ENCODE measurements at regions of chrX and their contacts with region 1.

Region 1: GRCh38 chrX:111098874-111099273 is 2.9 kb downstream of the PAK3 start:
- DNase-seq: peak; percentile 3 to 23
- ATAC-seq: peak in 1 of 8 donors; percentile 25
- H3K4me3 ChIP-seq: no peak overlapping the region
- H3K27ac ChIP-seq: no peak overlapping the region
- H3K4me1 ChIP-seq: peaks cover 0 to 4% (median 0%) of the 10 kb centered on the region in 9 donors
- H3K27me3 ChIP-seq: peaks cover 0 to 85% (median 0%) of the 10 kb centered on the region in 7 donors
- CTCF ChIP-seq: peak in 8 of 9 donors; percentile 32 to 75 (median 54)

Region 2: DNA sequence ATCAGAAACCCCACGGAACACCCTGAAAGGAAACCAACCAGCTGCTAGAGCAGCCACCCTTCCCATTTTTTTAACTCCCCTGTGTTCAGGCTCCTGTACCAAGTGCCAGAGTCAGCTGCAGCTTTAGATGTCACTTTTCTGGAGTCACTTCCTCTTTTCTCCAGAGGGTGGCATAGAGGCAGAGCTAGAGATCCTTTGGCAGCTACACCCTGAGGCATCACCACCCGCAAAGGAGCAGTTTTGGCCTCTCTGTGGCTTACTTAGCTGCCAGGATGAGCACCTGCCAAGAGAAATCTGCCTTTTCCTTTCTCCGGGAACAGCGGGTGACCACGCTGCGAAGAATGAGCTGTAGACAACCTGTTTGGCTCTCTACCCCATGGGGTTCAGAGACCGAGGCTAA is 245.3 kb before region 1 on chrX:
- intact Hi-C with region 1: loop called in 1 of 10 experiments (anchors 5 kb)
- DNase-seq: peak in 1 of 2 donors; percentile 3
- ATAC-seq: peak in 1 of 8 donors; percentile 47
- H3K4me3 ChIP-seq: no peak overlapping the region
- H3K27ac ChIP-seq: no peak overlapping the region
- H3K4me1 ChIP-seq: no peaks in the 10 kb centered on the region
- H3K27me3 ChIP-seq: peaks cover 0 to 62% (median 0%) of the 10 kb centered on the region in 7 donors
- CTCF ChIP-seq: peak in 6 of 9 donors; percentile 16 to 32 (median 26)

Region 3: GRCh38 chrX:110992611-110993010 is 106.3 kb before region 1 on chrX:
- intact Hi-C with region 1: loop called in 1 of 10 experiments (anchors 10 kb)
- DNase-seq: no peak
- ATAC-seq: no peak
- H3K4me3 ChIP-seq: no peak overlapping the region
- H3K27ac ChIP-seq: no peak overlapping the region
- H3K4me1 ChIP-seq: no peaks in the 10 kb centered on the region
- H3K27me3 ChIP-seq: peaks cover 0 to 60% (median 0%) of the 10 kb centered on the region in 7 donors
- CTCF ChIP-seq: peak in 6 of 9 donors; percentile 14 to 48 (median 30)

Region 4: DNA sequence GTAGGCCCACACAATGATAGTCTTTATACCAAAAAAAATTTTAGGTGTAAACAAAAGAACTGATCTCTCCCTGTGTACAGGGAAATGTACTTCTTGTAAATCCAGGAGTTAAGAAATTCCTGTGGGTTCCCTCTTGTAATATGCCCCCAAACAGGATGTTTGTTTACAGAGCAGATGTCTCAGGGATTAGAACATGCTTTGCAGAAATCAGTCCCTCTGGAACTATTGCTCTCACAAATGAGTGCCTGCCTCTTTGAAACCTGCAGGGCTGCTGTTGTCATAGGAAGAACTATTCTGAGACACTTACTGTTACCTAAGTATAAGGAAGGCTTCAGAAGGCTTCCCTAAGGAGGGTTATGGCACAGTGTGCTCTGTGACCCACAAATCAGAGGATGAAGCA is 32.7 kb after region 1 on chrX:
- intact Hi-C with region 1: loop called in 1 of 10 experiments (anchors 1 kb)
- DNase-seq: no peak
- ATAC-seq: no peak
- H3K4me3 ChIP-seq: no peak overlapping the region
- H3K27ac ChIP-seq: no peak overlapping the region
- H3K4me1 ChIP-seq: no peaks in the 10 kb centered on the region
- H3K27me3 ChIP-seq: peaks cover 0 to 67% (median 0%) of the 10 kb centered on the region in 7 donors
- CTCF ChIP-seq: no peak